ENCODE measurements at regions of chr15 and their contacts with region 1.

Region 1: GRCh38 chr15:78065284-78065872 is 12.1 kb downstream of the TBC1D2B start:
- DNase-seq: peak; percentile 78 to 93 (median 84)
- ATAC-seq: peak; percentile 80 to 91 (median 86)
- H3K4me3 ChIP-seq: no peak overlapping the region
- H3K27ac ChIP-seq: peak overlapping the region; percentile 82 to 99 (median 92)
- H3K4me1 ChIP-seq: peaks cover 0 to 95% (median 40%) of the 10 kb centered on the region in 4 donors
- H3K27me3 ChIP-seq: no peaks in the 10 kb centered on the region
- CTCF ChIP-seq: no peak
- POLR2A ChIP-seq: peak; percentile 55

Region 2: GRCh38 chr15:77821188-77821958 is 244.0 kb before region 1 on chr15:
- intact Hi-C with region 1: no loop called
- DNase-seq: peak; percentile 62 to 72 (median 67)
- ATAC-seq: peak; percentile 64 to 76 (median 72)
- H3K4me3 ChIP-seq: no peak overlapping the region
- H3K27ac ChIP-seq: no peak overlapping the region
- H3K4me1 ChIP-seq: peaks cover 0 to 12% (median 0%) of the 10 kb centered on the region in 4 donors
- H3K27me3 ChIP-seq: peaks cover 0 to 8% of the 10 kb centered on the region in 2 donors
- CTCF ChIP-seq: peak; percentile 44 to 68 (median 52)
- POLR2A ChIP-seq: no peak

Region 3: GRCh38 chr15:78000091-78000926 is 65.1 kb before region 1 on chr15:
- intact Hi-C with region 1: loop called in 1 of 2 experiments (anchors 10 kb)
- DNase-seq: peak; percentile 93 to 97 (median 96)
- ATAC-seq: peak; percentile 82 to 91 (median 88)
- H3K4me3 ChIP-seq: no peak overlapping the region
- H3K27ac ChIP-seq: peak overlapping the region in 2 of 3 donors; percentile 56 to 59
- H3K4me1 ChIP-seq: peaks cover 0 to 33% (median 20%) of the 10 kb centered on the region in 4 donors
- H3K27me3 ChIP-seq: no peaks in the 10 kb centered on the region
- CTCF ChIP-seq: peak; percentile 66 to 95 (median 86)
- POLR2A ChIP-seq: peak; percentile 76

Measured in right lobe of liver (tissue), 6 donors.